ENCODE measurements at regions of chr10 and their contacts with region 1.

Region 1: GRCh38 chr10:30467651-30468338 is 33.8 kb downstream of the MAP3K8 start:
- DNase-seq: no peak
- H3K4me3 ChIP-seq: no peak overlapping the region
- H3K27ac ChIP-seq: no peak overlapping the region
- H3K4me1 ChIP-seq: peaks cover 3 to 20% (median 15%) of the 10 kb centered on the region in 4 donors
- H3K27me3 ChIP-seq: no peaks in the 10 kb centered on the region
- CTCF ChIP-seq: no peak
- EP300 ChIP-seq: no peak
- POLR2A ChIP-seq: no peak

Region 2: DNA sequence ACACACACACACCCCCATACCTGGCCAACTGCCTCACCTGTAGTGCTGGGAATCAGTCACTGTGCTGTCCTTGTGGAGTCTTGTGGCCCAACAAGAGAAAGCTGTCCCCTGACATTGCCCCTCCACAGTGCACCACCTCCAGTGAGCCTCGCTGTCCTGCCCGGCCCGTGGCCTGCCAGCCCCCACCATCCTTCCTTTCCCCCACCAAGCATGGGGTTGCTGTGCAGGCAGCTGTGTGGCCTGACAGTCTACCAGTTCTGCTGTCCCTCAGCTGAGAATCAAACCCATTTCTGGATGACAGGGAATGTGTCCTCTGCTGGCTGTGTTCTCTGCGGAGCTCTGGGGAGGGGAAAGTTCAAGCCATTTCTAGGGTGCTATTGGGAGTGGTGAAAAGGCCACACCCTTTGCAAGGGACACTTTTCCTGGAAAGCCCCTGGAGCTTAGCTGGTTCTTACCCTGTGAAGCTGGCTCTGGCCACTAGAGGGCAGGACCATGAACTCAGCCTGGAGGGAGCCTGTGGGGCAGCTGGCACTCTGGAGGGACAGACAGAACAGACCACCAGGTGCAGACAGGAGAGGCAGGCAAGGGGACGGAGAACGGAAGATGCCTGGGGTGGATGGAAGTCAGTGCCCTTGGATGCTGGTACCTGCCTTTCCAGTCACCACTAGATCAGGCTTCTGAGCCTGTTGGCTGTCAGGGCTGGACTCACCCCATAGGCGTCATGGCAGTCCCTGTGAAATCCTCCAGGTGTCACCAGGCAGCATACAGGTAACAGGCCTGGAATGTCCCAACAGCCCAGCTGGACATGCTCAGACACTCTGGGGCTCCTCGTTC is 108.2 kb before region 1 on chr10:
- intact Hi-C with region 1: no loop called
- DNase-seq: peak; percentile 91
- H3K4me3 ChIP-seq: no peak overlapping the region
- H3K27ac ChIP-seq: no peak overlapping the region
- H3K4me1 ChIP-seq: peaks cover 0 to 3% (median 0%) of the 10 kb centered on the region in 4 donors
- H3K27me3 ChIP-seq: no peaks in the 10 kb centered on the region
- CTCF ChIP-seq: peak; percentile 39 to 71 (median 52)
- EP300 ChIP-seq: no peak
- POLR2A ChIP-seq: no peak

Region 3: GRCh38 chr10:30427512-30428362 is 40.1 kb before region 1 on chr10:
- intact Hi-C with region 1: loop called (anchors 5 kb)
- DNase-seq: no peak
- H3K4me3 ChIP-seq: no peak overlapping the region
- H3K27ac ChIP-seq: no peak overlapping the region
- H3K4me1 ChIP-seq: peaks cover 35 to 47% (median 39%) of the 10 kb centered on the region in 4 donors
- H3K27me3 ChIP-seq: no peaks in the 10 kb centered on the region
- CTCF ChIP-seq: no peak
- EP300 ChIP-seq: no peak
- POLR2A ChIP-seq: no peak

Region 4: GRCh38 chr10:30438021-30438850 is 29.6 kb before region 1 on chr10:
- intact Hi-C with region 1: no loop called
- DNase-seq: no peak
- H3K4me3 ChIP-seq: peak overlapping the region; percentile 82 to 94 (median 86)
- H3K27ac ChIP-seq: peak overlapping the region; percentile 97 to 100 (median 99)
- H3K4me1 ChIP-seq: peaks cover 60 to 82% (median 78%) of the 10 kb centered on the region in 4 donors
- H3K27me3 ChIP-seq: no peaks in the 10 kb centered on the region
- CTCF ChIP-seq: no peak
- EP300 ChIP-seq: no peak
- POLR2A ChIP-seq: no peak

Region 5: GRCh38 chr10:30529373-30529998 is 61.7 kb after region 1 on chr10:
- intact Hi-C with region 1: loop called (anchors 5 kb)
- DNase-seq: no peak
- H3K4me3 ChIP-seq: no peak overlapping the region
- H3K27ac ChIP-seq: peak overlapping the region in 3 of 4 donors; percentile 0 to 18 (median 11)
- H3K4me1 ChIP-seq: peaks cover 0 to 5% (median 4%) of the 10 kb centered on the region in 4 donors
- H3K27me3 ChIP-seq: no peaks in the 10 kb centered on the region
- CTCF ChIP-seq: no peak
- EP300 ChIP-seq: no peak
- POLR2A ChIP-seq: no peak

Region 6: GRCh38 chr10:30928742-30929141 is 460.9 kb after region 1 on chr10:
- intact Hi-C with region 1: no loop called
- DNase-seq: no peak
- H3K4me3 ChIP-seq: no peak overlapping the region
- H3K27ac ChIP-seq: no peak overlapping the region
- H3K4me1 ChIP-seq: no peaks in the 10 kb centered on the region
- H3K27me3 ChIP-seq: no peaks in the 10 kb centered on the region
- CTCF ChIP-seq: no peak
- EP300 ChIP-seq: no peak
- POLR2A ChIP-seq: no peak